WTC11 (cell line): ENCODE measurements at regions of chr6 and their contacts with region 1.

Region 1: DNA sequence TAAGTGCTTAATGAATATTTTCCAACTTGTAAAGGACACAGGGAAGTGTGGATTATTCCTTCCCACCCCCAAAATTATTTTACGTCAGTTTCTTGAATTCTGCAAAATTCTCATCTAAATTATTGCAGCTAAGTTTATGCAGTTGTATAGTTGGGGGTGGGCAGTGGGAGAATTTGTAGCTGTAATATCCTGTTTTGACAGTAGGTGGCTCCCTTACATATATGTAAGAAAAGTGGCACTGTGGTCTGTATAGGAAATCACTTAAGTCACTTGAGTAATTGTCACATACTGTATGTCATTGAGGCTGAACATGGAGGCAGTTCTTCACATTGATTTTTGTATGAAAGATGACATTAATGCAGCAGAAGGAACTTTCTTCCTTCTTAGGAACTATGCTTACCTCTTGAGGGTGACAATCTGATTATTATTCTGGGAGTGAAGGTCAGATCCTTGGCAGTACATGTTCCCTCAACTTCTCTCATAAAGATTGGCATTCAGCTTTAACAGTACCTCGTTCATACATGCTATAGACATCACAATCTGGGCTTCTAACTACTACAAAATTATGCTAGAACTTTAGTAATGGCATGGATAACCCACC is 14.7 kb upstream of the CFAP206 start:
- DNase-seq: no peak
- ATAC-seq: peak; percentile 80
- H3K4me3 Mint-ChIP-seq: no peak overlapping the region
- H3K27ac Mint-ChIP-seq: no peak overlapping the region
- H3K4me1 Mint-ChIP-seq: peaks cover 4% of the 10 kb centered on the region; the same call in 1 of the 2 replicates
- H3K27me3 Mint-ChIP-seq: no peaks in the 10 kb centered on the region
- CTCF ChIP-seq: peak; percentile 61

Region 2: DNA sequence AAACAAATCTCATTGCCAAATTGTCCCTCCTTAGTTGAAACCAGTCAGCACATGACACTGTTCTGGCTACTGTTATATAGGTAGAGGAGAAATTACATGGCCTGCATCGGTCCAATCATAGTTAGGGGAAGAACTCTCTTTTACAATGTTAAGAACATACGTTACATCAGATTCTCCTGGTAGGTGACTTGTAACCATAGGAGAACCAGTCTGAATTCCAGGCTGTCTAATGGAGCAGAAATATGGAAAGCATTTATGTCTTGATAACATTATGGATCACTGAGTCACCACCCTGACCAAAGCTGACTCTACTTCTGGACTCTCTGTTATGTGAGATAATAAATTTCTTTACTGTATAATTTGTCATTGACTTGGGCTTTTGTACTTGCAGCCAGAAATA is 414.9 kb before region 1 on chr6:
- CTCF ChIA-PET with region 1: no interaction called
- POLR2A ChIA-PET with region 1: no interaction called
- DNase-seq: no peak
- ATAC-seq: no peak
- H3K4me3 Mint-ChIP-seq: no peak overlapping the region
- H3K27ac Mint-ChIP-seq: no peak overlapping the region
- H3K4me1 Mint-ChIP-seq: peaks cover 19% of the 10 kb centered on the region
- H3K27me3 Mint-ChIP-seq: no peaks in the 10 kb centered on the region
- CTCF ChIP-seq: no peak

Region 3: GRCh38 chr6:87066449-87067333 is 326.4 kb before region 1 on chr6:
- CTCF ChIA-PET with region 1: interaction called, 24 read pairs
- POLR2A ChIA-PET with region 1: no interaction called
- DNase-seq: peak; percentile 14
- ATAC-seq: no peak; the same call in 1 of the 2 replicates
- H3K4me3 Mint-ChIP-seq: peak overlapping the region; percentile 17; the same call in 1 of the 2 replicates
- H3K27ac Mint-ChIP-seq: no peak overlapping the region
- H3K4me1 Mint-ChIP-seq: peaks cover 12% of the 10 kb centered on the region
- H3K27me3 Mint-ChIP-seq: no peaks in the 10 kb centered on the region; the same call in 1 of the 2 replicates
- CTCF ChIP-seq: peak; percentile 48; the same call in 1 of the 2 replicates

Region 4: DNA sequence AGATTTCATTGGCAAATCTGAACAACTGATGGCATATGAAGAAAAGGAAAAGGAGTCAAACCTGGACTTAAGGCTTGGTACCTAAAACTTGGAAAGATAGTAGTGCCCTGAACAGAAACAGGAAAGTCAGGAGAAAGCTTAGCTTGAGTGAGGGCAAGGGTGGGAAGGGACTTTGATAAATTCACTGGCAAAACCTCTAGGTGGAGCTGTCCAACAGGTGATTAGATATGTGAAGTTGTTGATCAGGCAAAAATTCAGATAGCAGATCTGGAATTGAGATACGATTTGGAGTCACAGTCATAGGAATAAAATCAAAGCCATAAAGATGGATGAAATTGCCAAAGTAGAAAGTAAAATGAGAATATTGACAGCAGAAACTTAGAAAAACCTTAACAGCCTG is 253.9 kb before region 1 on chr6:
- CTCF ChIA-PET with region 1: interaction called, 10 read pairs
- POLR2A ChIA-PET with region 1: no interaction called
- DNase-seq: no peak
- ATAC-seq: peak; percentile 69
- H3K4me3 Mint-ChIP-seq: no peak overlapping the region
- H3K27ac Mint-ChIP-seq: no peak overlapping the region
- H3K4me1 Mint-ChIP-seq: peaks cover 7% of the 10 kb centered on the region; the same call in 1 of the 2 replicates
- H3K27me3 Mint-ChIP-seq: peaks cover 31% of the 10 kb centered on the region
- CTCF ChIP-seq: peak; percentile 32

Region 5: GRCh38 chr6:87407901-87408720 is 15.0 kb after region 1 on chr6 and contains the start of gene CFAP206:
- CTCF ChIA-PET with region 1: interaction called, 17 read pairs
- POLR2A ChIA-PET with region 1: no interaction called
- DNase-seq: peak; percentile 77
- ATAC-seq: peak; percentile 88
- H3K4me3 Mint-ChIP-seq: peak within 1 kb of the TSS; percentile 79
- H3K27ac Mint-ChIP-seq: peak within 1 kb of the TSS; percentile 60; the same call in 1 of the 2 replicates
- H3K4me1 Mint-ChIP-seq: 0 out of 2 replicates have a peak, but pooled peaks cover 3% of the 10 kb centered on the region
- H3K27me3 Mint-ChIP-seq: peaks cover 12% of the 10 kb centered on the region
- CTCF ChIP-seq: no peak
- total RNA-seq, gene CFAP206: not detected in 3 replicates